RWPE1 (cell line): ENCODE measurements at regions of chr7 and their contacts with region 1.

Region 1: GRCh38 chr7:45923290-45923689 is 2.2 kb upstream of the IGFBP3 start:
- DNase-seq: peak; percentile 50
- H3K27ac ChIP-seq: no peak overlapping the region
- CTCF ChIP-seq: peak; percentile 92

Region 2: GRCh38 chr7:46058086-46058823 is 135.0 kb after region 1 on chr7:
- CTCF ChIA-PET with region 1: no interaction called
- POLR2A ChIA-PET with region 1: no interaction called
- DNase-seq: peak; percentile 30
- H3K27ac ChIP-seq: no peak overlapping the region
- CTCF ChIP-seq: no peak

Region 3: DNA sequence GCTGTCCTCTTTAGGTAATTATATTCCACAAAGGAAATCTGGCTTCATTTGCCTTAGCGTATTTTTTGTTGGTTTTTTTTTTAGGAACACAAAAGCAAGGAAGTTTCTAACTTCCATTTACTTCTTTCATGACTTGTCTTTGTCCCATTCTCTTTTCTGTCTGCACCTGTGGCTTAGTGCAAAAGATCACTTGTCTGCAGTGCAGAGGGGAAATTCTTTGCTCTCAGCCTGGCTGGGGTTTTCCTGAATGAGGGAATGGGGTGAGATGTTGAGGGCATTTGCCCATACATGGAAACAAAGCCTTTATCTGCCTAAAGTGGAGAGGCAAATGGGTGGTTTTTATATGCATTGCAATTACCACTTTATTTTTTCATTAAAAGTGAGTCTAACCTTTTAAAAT is 358.9 kb after region 1 on chr7:
- CTCF ChIA-PET with region 1: interaction called, 11 read pairs
- POLR2A ChIA-PET with region 1: no interaction called
- DNase-seq: no peak
- H3K27ac ChIP-seq: no peak overlapping the region
- CTCF ChIP-seq: no peak

Region 4: DNA sequence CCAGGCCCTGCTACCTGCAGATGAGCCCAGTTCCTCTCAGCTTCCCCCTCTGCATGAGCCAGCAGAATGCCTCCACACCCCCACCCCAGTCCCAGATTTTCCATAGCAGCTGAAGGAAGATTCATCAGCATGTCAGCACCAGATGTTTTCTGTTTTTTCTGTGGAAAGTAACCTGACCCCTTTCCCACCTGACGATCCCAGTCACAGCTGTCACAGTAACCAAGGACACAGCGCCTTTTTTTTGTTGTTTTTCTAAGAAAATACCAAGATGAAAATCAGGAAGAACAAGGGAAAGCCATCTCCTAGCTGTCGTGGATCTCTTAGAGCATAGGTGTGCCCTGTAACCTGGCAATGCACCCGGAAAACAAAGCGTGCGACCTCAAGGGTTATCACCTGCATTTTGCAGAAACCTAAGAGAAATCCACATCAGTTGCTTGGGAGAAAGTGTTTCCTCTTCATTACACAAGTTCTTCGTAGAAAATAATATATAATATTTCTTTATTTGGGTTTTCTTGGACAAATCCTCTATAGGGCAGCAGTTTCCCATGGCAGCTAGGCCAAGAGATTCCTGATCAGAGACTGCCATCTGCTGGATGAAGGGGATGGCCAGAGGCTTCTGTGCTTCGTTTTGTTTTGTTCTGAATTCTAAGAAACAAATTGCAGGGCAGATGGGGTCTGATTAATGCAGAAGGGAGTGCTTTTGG is 1256.7 kb after region 1 on chr7:
- CTCF ChIA-PET with region 1: interaction called, 13 read pairs
- POLR2A ChIA-PET with region 1: no interaction called
- DNase-seq: peak; percentile 62
- H3K27ac ChIP-seq: no peak overlapping the region
- CTCF ChIP-seq: peak; percentile 78